MCF 10A (cell line): ENCODE measurements at regions of chr13 and their contacts with region 1.

Region 1: DNA sequence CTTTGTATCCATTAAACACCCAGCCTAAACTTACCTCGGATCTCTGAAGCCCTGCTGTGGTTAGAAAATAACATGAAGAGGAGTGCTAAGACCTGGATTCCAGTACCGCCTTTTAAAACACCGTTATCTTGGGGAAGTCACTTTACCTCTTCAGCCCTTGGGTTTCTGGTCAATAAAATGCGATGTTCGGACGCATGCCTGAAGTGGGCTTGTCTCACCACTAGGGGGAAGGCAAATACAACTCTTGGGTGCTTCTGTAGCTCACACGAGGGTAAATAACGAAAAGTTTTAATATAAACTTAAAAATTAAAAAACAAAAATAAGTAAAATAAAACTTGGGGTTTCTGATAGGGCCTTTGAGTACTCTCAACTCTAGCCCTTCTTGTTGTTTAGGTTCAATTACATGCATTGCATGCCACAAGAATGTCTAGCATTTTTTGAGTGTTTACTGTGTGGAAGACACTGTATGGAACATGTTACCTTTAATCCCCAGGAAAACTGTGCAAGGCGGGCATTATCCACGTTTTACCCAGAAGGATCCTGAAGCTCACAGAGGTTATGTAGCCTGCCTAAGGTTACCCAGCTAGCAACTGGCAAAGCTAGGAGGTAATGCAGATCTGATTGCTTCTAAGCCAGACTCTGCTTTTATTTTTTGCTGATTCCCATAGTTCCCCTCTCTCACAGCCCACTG is 240.4 kb downstream of the LMO7 start:
- DNase-seq: peak; percentile 80
- H3K4me3 Mint-ChIP-seq: no peak overlapping the region
- H3K27ac Mint-ChIP-seq: no peak overlapping the region
- H3K4me1 Mint-ChIP-seq: no peaks in the 10 kb centered on the region
- H3K27me3 Mint-ChIP-seq: no peaks in the 10 kb centered on the region
- CTCF ChIP-seq: peak; percentile 90

Region 2: DNA sequence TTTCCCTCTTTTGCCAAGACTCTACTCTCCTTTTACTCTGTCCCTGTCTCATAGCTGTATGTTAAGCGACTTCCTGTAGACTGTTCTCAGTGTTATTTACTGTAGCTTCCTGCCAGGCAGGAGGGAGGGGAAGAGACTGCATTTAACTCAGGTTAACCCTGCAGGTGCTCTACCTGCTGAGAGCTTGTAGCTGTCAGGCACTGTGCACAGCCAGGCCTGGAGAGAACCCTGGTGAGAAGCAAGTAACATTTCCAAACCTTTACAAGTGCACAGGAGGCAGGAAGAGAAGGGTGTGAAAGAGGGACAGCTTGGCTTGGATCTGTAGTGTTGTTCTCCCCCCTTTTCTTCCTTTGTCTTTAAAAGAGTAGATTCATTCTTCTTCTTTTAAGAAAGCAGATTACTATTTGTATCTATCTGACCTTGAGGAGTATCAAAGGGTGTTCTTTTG is 73.3 kb before region 1 on chr13:
- CTCF ChIA-PET with region 1: no interaction called
- POLR2A ChIA-PET with region 1: no interaction called
- intact Hi-C with region 1: no loop called
- DNase-seq: no peak
- H3K4me3 Mint-ChIP-seq: no peak overlapping the region
- H3K27ac Mint-ChIP-seq: no peak overlapping the region
- H3K4me1 Mint-ChIP-seq: no peaks in the 10 kb centered on the region
- H3K27me3 Mint-ChIP-seq: no peaks in the 10 kb centered on the region
- CTCF ChIP-seq: no peak

Region 3: DNA sequence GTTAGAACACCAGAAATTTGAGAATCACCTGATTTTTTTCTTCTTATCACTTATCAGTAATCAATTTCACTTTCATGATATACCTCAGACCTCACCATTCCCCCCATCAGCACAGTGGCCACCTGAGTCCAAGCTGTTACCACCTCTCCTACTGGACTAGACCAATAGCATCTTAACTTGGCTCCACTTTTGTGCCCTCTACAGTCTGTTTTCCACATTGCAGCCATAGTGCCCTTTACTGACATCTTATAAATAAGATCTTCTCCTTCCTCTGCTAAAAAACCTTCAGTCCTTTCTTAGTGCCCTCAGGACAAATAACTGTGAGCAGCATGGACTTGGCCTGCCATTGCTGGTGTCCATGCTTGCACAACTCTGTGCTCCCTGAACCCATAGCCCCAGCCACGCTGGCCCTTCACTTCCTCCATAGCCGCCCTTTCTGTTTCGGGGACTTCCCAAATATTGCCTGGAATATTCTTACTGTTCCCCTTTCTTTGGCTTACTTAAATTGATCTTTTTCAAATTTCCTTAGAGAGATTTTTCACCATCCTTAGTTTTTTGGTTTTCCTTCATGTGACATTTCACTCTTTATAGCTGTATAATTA is 140.4 kb after region 1 on chr13:
- CTCF ChIA-PET with region 1: interaction called, 5 read pairs
- POLR2A ChIA-PET with region 1: no interaction called
- intact Hi-C with region 1: loop called (anchors 1 kb)
- DNase-seq: peak; percentile 62
- H3K4me3 Mint-ChIP-seq: no peak overlapping the region
- H3K27ac Mint-ChIP-seq: no peak overlapping the region
- H3K4me1 Mint-ChIP-seq: no peaks in the 10 kb centered on the region
- H3K27me3 Mint-ChIP-seq: no peaks in the 10 kb centered on the region
- CTCF ChIP-seq: peak; percentile 53

Region 4: DNA sequence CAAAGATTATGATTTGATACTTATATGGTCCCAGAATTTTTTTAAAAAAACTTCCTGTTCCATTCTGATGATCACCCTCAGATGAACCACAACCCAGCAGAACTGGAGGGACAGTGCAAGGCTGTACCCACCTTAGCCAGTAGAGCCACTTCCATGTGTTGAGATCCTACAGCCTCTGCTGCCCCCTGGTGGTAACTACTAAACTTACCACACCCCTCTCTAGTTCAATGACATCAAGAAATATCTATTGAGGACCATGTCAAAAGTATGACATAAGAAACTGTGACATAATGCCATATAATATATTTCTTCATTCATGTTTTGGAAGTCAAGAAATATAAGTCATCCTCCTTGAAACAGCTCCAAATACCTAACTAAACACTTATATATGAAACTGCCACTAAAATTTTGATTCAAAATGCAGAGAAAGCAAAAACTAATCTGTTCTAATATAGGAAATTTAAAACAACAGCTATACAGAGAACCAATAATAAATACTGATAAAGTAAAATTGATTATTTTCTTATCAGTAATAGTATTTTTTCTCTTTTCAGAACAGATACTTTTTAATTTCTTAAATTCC is 597.1 kb after region 1 on chr13:
- CTCF ChIA-PET with region 1: interaction called, 122 read pairs
- POLR2A ChIA-PET with region 1: interaction called, 22 read pairs
- intact Hi-C with region 1: loop called (anchors 1 kb)
- DNase-seq: peak; percentile 86
- H3K4me3 Mint-ChIP-seq: no peak overlapping the region
- H3K27ac Mint-ChIP-seq: no peak overlapping the region
- H3K4me1 Mint-ChIP-seq: no peaks in the 10 kb centered on the region
- H3K27me3 Mint-ChIP-seq: no peaks in the 10 kb centered on the region
- CTCF ChIP-seq: peak; percentile 87

Region 5: GRCh38 chr13:76799696-76800095 is 923.2 kb after region 1 on chr13:
- CTCF ChIA-PET with region 1: no interaction called
- POLR2A ChIA-PET with region 1: no interaction called
- intact Hi-C with region 1: no loop called
- DNase-seq: no peak
- H3K4me3 Mint-ChIP-seq: no peak overlapping the region
- H3K27ac Mint-ChIP-seq: no peak overlapping the region
- H3K4me1 Mint-ChIP-seq: no peaks in the 10 kb centered on the region
- H3K27me3 Mint-ChIP-seq: no peaks in the 10 kb centered on the region
- CTCF ChIP-seq: no peak

Region 6: DNA sequence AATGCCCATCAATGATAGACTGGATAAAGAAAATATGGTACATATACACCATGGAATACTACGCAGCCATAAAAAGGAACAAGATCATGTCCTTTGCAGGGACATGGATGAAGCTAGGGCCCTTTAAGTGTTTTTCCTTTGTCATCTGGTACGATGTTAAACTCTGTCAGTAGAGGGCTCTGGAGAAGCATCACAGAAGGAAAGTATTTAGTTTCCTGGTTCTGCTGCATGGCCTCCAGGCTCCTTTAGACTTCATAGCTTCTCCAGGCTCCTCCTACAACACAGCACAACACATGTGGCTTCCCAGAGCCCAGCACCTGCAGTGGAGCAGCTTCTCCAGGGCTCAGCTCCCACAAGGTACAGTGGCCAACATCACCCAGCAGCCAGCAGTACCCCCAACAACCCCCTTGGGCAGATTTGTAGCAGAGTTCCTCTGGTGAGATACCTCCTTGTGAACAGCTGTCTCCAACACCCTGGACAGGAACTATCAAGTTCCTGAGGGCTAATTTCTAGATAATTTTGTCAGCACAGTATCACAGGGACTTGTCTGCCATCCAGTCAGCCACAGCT is 946.3 kb after region 1 on chr13:
- CTCF ChIA-PET with region 1: interaction called, 7 read pairs
- POLR2A ChIA-PET with region 1: no interaction called
- intact Hi-C with region 1: loop called (anchors 10 kb)
- DNase-seq: peak; percentile 51
- H3K4me3 Mint-ChIP-seq: no peak overlapping the region
- H3K27ac Mint-ChIP-seq: no peak overlapping the region
- H3K4me1 Mint-ChIP-seq: no peaks in the 10 kb centered on the region
- H3K27me3 Mint-ChIP-seq: peaks cover 12% of the 10 kb centered on the region
- CTCF ChIP-seq: peak; percentile 37

Region 7: GRCh38 chr13:76903544-76904162 is 1027.1 kb after region 1 on chr13:
- CTCF ChIA-PET with region 1: interaction called, 50 read pairs
- POLR2A ChIA-PET with region 1: interaction called, 9 read pairs
- intact Hi-C with region 1: loop called (anchors 1 kb)
- DNase-seq: peak; percentile 79
- H3K4me3 Mint-ChIP-seq: no peak overlapping the region
- H3K27ac Mint-ChIP-seq: no peak overlapping the region
- H3K4me1 Mint-ChIP-seq: peaks cover 9% of the 10 kb centered on the region
- H3K27me3 Mint-ChIP-seq: no peaks in the 10 kb centered on the region
- CTCF ChIP-seq: peak; percentile 98

Region 8: DNA sequence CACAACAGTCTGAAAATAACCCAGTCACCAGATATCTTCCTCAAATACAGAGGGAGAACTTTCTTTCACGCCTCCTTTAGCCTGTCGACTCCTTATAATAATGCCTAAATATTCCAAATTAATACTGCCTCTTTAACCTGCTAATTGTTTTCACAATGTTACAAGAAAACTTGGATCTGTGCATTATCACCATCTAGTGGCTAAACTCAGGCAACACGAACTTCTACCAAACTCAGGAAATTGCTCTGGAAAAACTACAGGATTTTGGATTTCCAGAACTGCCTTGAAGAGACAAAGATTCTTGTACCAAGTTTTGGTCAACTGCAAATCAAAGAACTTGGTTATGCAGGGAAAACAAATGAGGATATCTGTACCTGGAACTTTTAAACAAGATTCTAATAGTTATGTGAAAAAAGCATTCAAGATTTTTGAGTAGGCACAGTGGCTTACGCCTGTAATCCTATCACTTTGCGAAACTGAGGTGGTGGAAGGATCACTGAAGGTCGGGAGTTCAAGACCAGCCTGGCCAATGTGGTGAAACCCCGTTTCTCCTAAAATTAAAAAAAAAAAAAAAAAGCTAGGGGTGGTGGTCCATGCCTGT is 1126.2 kb after region 1 on chr13:
- CTCF ChIA-PET with region 1: interaction called, 13 read pairs
- POLR2A ChIA-PET with region 1: no interaction called
- intact Hi-C with region 1: no loop called
- DNase-seq: peak; percentile 49
- H3K4me3 Mint-ChIP-seq: no peak overlapping the region
- H3K27ac Mint-ChIP-seq: peak overlapping the region; percentile 69
- H3K4me1 Mint-ChIP-seq: peaks cover 6% of the 10 kb centered on the region
- H3K27me3 Mint-ChIP-seq: no peaks in the 10 kb centered on the region
- CTCF ChIP-seq: peak; percentile 55